Motor neuron (in vitro differentiated cells): ENCODE measurements at regions of chr7 and their contacts with region 1.

Region 1: DNA sequence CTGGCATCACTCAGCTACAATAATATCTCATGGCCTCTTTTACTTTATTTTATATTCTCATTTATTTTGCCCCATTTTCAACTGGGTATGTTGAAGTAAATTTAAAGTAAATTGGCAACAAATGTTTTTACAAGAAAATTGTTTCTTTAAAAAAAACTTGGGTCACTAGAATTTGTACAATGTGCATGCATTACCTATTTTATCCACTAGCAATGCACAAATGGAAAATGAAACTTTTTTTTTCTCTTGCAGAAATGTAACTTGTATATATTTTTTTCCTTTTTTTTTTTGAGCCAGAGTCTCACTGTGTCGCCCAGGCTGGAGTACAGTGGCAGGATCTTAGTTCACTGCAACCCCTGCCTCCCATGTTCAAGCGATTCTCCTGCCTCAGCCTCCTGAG is 10.3 kb upstream of the H2AZ2 start:
- ATAC-seq: no peak
- H3K4me3 ChIP-seq: no peak overlapping the region
- H3K27ac ChIP-seq: no peak overlapping the region
- H3K4me1 ChIP-seq: no peaks in the 10 kb centered on the region

Region 2: DNA sequence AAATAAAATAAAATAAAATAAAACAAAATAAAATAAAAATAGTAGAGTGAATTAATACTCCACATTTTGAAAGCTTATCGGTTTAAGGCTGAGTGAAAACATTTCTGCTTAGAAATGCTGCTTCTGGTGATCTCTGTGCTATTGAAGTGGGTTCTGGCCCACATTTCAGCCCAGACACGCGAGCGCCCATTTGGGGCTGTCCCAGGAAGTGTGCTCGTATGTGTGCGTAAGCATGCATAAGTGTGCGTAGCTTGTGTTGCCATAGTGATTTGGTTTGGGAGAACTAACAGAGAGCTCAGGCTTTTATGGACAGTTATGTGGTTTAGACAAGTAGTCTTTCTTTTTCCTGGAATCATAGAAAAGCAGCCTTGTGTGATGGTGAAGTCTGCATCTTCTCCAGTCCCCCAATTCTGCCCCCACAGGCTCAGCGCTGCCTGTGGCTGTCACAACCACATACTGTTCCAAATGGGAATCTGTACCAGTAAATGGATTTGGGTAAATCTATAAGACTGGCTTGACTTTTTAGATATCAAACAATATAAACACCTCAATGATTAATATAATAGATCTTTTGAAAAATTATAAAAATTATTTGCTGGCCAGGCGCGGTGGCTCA is 56.9 kb after region 1 on chr7:
- in situ Hi-C with region 1: loop called in 2 of 9 experiments (anchors 10 kb)
- ATAC-seq: peak in 2 of 8 experiments; percentile 46 to 68
- H3K4me3 ChIP-seq: no peak overlapping the region
- H3K27ac ChIP-seq: no peak overlapping the region
- H3K4me1 ChIP-seq: no peaks in the 10 kb centered on the region

Region 3: GRCh38 chr7:44921607-44922359 is 63.6 kb after region 1 on chr7:
- in situ Hi-C with region 1: loop called in 2 of 9 experiments (anchors 10 kb)
- ATAC-seq: peak in 6 of 8 experiments; percentile 59 to 99 (median 95)
- H3K4me3 ChIP-seq: no peak overlapping the region
- H3K27ac ChIP-seq: no peak overlapping the region
- H3K4me1 ChIP-seq: no peaks in the 10 kb centered on the region